Activated naive CD4-positive, alpha-beta T cell treated with anti-CD3 and anti-CD28 coated beads, Interleukin-2, amount 10 ng/mL, durations not matched to agents 7 days and 5 days (primary cell): ENCODE measurements at regions of chr11 and their contacts with region 1.

Region 1: GRCh38 chr11:102268329-102269193 is 48.7 kb upstream of the BIRC3 start:
- DNase-seq: peak; percentile 81
- H3K4me3 Mint-ChIP-seq: peak overlapping the region; percentile 52
- H3K27ac Mint-ChIP-seq: no peak overlapping the region
- H3K4me1 Mint-ChIP-seq: peaks cover 30% of the 10 kb centered on the region
- H3K27me3 Mint-ChIP-seq: peaks cover 50% of the 10 kb centered on the region

Region 2: DNA sequence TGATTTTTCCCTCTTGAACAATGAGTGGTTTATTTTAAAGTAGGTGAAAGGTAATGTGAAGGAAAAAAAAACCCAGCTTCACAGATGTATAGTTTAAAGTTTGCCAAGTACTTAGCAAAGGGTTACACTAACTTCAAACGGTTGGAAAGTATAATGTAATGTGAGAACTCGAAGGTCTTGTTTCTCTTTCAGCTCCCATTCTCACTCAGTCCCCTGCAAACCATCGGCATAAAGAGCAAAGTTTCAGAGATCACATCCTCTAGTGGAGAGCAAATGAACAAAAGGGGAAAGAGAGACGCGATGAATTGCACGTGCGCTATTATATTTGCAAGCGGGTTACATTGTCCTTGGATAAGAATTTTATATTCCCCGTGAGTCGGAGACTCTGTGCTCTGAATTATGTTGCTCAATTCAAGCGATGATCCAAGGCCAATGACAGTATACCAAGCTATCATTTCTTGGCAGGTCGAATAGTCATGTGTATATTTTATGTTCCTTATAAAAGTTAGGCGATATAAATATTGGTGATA is 11.1 kb after region 1 on chr11:
- CTCF ChIA-PET with region 1: interaction called, 15 read pairs
- DNase-seq: no peak
- H3K4me3 Mint-ChIP-seq: no peak overlapping the region
- H3K27ac Mint-ChIP-seq: no peak overlapping the region
- H3K4me1 Mint-ChIP-seq: peaks cover 10% of the 10 kb centered on the region
- H3K27me3 Mint-ChIP-seq: peaks cover 7% of the 10 kb centered on the region